Psoas muscle (tissue), 8 donors: ENCODE measurements at regions of chr5 and their contacts with region 1.

Region 1: DNA sequence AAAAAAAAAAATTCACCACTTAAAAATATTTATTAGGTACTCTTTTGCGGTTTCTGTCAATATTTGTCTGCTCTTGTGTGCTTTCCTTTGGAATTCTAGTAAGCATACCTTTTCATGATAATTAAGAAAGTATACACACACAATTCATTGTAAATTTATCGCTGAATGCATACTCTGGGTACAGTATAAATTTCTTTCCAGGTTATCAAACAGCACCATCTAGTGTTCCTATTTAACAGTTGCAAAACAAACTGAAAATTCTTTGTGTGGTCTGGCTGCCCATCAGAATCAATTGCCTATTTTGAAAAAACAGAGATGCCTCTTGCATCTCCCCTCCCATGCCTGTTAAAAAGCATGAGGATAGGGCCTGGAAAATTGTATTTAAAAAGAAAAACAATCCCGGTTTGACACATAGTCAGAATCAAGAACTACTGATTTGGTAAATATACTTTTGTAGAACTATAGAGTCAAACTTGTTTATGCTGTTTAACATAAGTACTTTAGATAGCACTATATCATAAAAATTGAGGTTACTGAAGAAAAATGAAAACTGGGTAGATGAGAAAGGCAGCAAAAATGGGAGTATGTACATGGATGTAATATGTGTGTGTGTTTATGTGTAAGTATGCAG is 16.2 kb downstream of the PGGT1B start:
- DNase-seq: no peak
- ATAC-seq: peak in 3 of 4 donors; percentile 37 to 77 (median 63)
- H3K4me3 ChIP-seq: no peak overlapping the region
- H3K27ac ChIP-seq: no peak overlapping the region
- H3K4me1 ChIP-seq: peaks cover 23% of the 10 kb centered on the region
- H3K27me3 ChIP-seq: no peaks in the 10 kb centered on the region
- CTCF ChIP-seq: peak; percentile 74

Region 2: DNA sequence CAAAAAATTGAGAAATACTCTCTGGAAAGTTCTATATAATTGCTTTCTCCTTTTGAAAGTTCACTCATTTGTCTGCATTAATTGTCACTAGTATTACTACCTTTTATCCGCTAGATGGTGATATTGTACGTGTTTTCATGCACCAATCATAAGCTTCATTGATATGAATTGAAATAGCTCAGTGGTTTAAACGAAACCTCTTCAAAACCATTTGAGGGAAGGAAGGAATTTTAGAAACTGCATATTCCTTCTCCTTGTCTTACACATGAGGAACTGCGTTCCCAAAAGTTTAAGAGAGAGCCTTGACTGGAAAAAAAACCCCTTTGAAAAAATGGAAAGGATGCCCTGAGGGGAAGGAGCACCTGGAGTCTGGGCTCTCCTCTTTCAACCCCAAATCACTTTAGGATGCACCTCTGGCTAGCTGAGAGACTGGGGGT is 1634.4 kb before region 1 on chr5:
- intact Hi-C with region 1: loop called in 1 of 2 experiments (anchors 5 kb)
- DNase-seq: no peak
- ATAC-seq: peak in 3 of 4 donors; percentile 49 to 80 (median 58)
- H3K4me3 ChIP-seq: no peak overlapping the region
- H3K27ac ChIP-seq: no peak overlapping the region
- H3K4me1 ChIP-seq: no peaks in the 10 kb centered on the region
- H3K27me3 ChIP-seq: peaks cover 0 to 5% (median 0%) of the 10 kb centered on the region in 3 donors
- CTCF ChIP-seq: peak; percentile 65

Region 3: GRCh38 chr5:115098041-115098702 is 148.3 kb before region 1 on chr5:
- intact Hi-C with region 1: loop called (anchors 1 to 5 kb)
- DNase-seq: no peak
- ATAC-seq: peak in 2 of 4 donors; percentile 53 to 62
- H3K4me3 ChIP-seq: no peak overlapping the region
- H3K27ac ChIP-seq: no peak overlapping the region
- H3K4me1 ChIP-seq: no peaks in the 10 kb centered on the region
- H3K27me3 ChIP-seq: no peaks in the 10 kb centered on the region
- CTCF ChIP-seq: peak; percentile 59

Region 4: GRCh38 chr5:115423541-115423940 is 177.1 kb after region 1 on chr5:
- intact Hi-C with region 1: no loop called
- DNase-seq: peak; percentile 47 to 79
- ATAC-seq: peak; percentile 94 to 98 (median 96)
- H3K4me3 ChIP-seq: no peak overlapping the region
- H3K27ac ChIP-seq: peak overlapping the region; percentile 80
- H3K4me1 ChIP-seq: peaks cover 45% of the 10 kb centered on the region
- H3K27me3 ChIP-seq: no peaks in the 10 kb centered on the region
- CTCF ChIP-seq: no peak